ENCODE measurements at regions of chr10 and their contacts with region 1.

Region 1: DNA sequence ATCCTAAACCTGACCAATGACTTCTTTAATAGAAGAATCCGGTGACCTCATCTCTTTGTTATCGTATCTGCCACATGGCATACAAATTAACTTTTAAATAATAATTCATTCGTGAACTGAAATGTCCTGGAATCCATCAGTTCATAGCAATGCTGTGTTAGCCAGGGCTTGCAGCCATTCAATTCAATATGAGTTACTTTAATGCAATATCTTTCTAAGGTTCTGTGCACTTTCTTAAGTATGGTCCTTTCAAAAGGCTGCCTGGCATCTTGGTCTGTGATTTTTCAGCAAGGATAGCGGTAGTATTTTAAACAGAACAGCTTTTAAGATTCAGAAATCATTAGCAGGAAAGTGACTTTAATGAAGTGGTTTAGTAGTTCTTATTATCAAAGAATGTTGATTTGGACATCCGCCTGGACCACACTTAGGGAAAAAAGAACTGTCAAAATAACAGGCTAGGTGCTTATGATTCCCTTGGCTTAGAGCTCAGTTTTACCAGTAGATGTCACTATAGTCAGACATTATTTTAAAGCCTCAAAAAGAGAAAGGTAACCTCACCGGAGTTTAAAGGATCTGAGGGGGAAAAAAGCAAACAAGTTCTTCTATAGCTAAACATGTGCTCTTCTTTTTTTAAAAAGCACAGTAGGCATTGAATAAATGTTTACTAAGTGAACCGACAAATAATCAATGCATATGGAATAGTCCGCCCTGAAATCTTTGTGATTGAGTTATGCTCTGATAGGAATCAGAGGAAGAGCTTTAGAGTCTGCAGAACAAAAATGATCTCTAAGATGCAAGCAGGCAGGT is 22.7 kb downstream of the SLC35G1 start:
- DNase-seq: no peak

Region 2: GRCh38 chr10:94194256-94194655 is 277.8 kb after region 1 on chr10:
- intact Hi-C with region 1: no loop called
- DNase-seq: no peak

Region 3: DNA sequence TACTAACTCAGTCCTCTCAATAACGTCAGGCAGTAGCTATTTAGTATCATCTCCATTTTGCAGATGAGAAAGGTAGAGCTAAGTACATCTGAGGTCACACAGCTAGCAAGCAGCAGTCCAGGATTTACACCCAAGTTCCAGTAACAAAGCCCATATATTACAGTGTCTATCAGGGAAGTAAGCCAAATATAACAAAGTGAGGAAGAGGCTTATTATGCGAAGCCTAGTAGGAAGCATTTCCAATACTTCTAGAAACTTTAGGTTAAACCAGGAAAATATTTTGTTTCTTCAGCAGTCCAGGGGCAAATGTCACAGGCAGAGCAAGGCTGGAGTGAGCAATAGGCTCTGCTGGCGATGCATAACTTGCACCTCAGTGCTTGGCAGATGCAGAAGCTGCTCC is 392.4 kb after region 1 on chr10:
- intact Hi-C with region 1: loop called in 1 of 2 experiments (anchors 10 kb)
- DNase-seq: no peak